ENCODE measurements at regions of chr1 and their contacts with region 1.

Region 1: GRCh38 chr1:235006132-235006943 is 122.3 kb downstream of the TOMM20 start:
- DNase-seq: no peak
- ATAC-seq: no peak
- H3K4me3 ChIP-seq: no peak overlapping the region
- H3K4me3 Mint-ChIP-seq: no peak overlapping the region
- H3K27ac ChIP-seq: no peak overlapping the region
- H3K27ac Mint-ChIP-seq: no peak overlapping the region
- H3K4me1 ChIP-seq: peaks cover 10% of the 10 kb centered on the region
- H3K4me1 Mint-ChIP-seq: peaks cover 25% of the 10 kb centered on the region
- H3K27me3 ChIP-seq: no peaks in the 10 kb centered on the region
- H3K27me3 Mint-ChIP-seq: no peaks in the 10 kb centered on the region
- CTCF ChIP-seq: no peak

Region 2: DNA sequence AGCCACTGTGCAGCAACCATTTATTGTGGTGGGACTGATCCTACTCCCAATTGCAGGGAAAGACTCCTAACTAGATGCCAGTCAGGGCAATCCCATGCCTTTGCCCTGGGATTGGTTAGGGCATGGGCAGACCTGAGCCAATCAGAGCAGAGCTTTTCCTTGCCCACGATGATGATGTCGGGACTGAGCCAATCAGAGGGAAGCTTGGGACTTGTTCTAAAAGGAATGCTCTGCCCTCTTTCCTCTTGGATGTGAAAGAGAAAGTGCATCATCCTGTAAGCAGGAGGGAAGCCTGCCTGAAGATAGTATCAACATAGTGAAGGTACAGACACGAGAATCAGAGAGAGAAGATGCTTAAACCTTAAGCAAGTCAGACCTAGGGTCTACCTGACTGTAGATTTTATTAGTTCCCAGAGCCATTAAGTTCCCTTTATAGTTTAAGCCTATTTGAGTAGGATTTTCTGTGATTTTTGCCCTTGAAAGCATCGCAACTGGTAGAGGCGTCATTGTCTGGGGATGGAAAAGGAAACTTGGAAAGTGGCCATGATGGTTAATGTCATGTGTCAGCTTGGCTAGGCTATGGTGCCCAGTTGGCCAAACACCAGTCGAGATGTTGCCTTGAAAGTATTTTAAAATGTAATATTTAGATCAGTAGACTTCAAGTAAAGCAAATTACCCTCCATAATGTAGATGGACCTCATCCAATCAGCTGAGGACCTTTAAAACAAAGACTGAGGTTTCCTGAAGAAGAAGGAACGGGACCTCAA is 416.3 kb before region 1 on chr1:
- CTCF ChIA-PET with region 1: no interaction called
- POLR2A ChIA-PET with region 1: no interaction called
- intact Hi-C with region 1: no loop called
- DNase-seq: no peak
- ATAC-seq: no peak
- H3K4me3 ChIP-seq: no peak overlapping the region
- H3K4me3 Mint-ChIP-seq: no peak overlapping the region
- H3K27ac ChIP-seq: no peak overlapping the region
- H3K27ac Mint-ChIP-seq: no peak overlapping the region
- H3K4me1 ChIP-seq: no peaks in the 10 kb centered on the region
- H3K4me1 Mint-ChIP-seq: peaks cover 9% of the 10 kb centered on the region
- H3K27me3 ChIP-seq: peaks cover 0 to 2% of the 10 kb centered on the region in 2 experiments
- H3K27me3 Mint-ChIP-seq: peaks cover 9% of the 10 kb centered on the region
- CTCF ChIP-seq: no peak

Region 3: GRCh38 chr1:234709473-234710228 is 296.7 kb before region 1 on chr1:
- CTCF ChIA-PET with region 1: no interaction called
- POLR2A ChIA-PET with region 1: no interaction called
- intact Hi-C with region 1: no loop called
- DNase-seq: no peak
- ATAC-seq: no peak
- H3K4me3 ChIP-seq: no peak overlapping the region
- H3K4me3 Mint-ChIP-seq: no peak overlapping the region
- H3K27ac ChIP-seq: no peak overlapping the region
- H3K27ac Mint-ChIP-seq: no peak overlapping the region
- H3K4me1 ChIP-seq: no peaks in the 10 kb centered on the region
- H3K4me1 Mint-ChIP-seq: peaks cover 7% of the 10 kb centered on the region
- H3K27me3 ChIP-seq: no peaks in the 10 kb centered on the region
- H3K27me3 Mint-ChIP-seq: no peaks in the 10 kb centered on the region
- CTCF ChIP-seq: no peak

Region 4: DNA sequence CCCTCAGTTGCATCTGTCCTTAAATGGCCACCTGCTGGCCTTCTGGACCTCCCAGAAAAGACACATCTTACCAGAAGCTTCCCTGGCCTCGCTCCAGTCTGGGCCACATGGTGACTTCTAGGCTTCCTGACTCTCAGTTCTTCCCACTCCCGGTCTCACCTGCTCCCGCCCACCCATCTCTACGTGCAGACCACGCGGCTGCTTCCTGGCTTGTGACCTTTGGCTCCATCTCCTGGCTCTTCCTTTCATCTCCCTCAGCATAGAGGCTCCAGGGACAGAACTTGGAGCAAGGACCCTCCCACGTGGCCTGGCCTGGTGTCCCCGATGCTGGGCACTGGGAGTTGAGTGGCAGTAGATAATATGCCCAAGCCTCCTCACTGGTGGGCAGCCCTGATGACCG is 271.5 kb before region 1 on chr1:
- CTCF ChIA-PET with region 1: no interaction called
- POLR2A ChIA-PET with region 1: no interaction called
- intact Hi-C with region 1: no loop called
- DNase-seq: no peak
- ATAC-seq: no peak
- H3K4me3 ChIP-seq: no peak overlapping the region
- H3K4me3 Mint-ChIP-seq: no peak overlapping the region
- H3K27ac ChIP-seq: no peak overlapping the region
- H3K27ac Mint-ChIP-seq: no peak overlapping the region
- H3K4me1 ChIP-seq: peaks cover 32% of the 10 kb centered on the region
- H3K4me1 Mint-ChIP-seq: peaks cover 31% of the 10 kb centered on the region
- H3K27me3 ChIP-seq: no peaks in the 10 kb centered on the region
- H3K27me3 Mint-ChIP-seq: no peaks in the 10 kb centered on the region
- CTCF ChIP-seq: no peak

Region 5: DNA sequence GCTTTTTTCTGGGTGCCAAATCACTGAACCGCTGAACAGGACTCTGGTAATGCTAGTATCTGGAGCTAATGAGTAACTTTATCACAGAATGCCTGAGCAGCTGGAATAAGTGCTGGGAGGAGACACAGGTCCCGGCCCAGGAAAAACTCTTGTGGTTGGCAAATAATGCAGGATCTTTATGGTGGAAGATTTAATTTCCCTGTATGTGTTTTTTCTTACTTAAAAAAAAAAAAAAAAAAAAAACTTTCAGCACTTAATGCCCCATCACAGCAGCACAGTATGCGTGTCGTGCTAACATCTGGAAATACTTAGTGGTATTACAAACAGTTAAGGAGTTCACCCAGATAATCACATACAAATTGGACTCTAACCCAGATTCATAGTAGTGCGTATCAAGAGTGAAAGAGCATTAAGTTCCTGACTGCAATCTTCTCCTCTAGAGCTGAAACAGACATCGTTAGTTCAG is 98.4 kb before region 1 on chr1:
- CTCF ChIA-PET with region 1: no interaction called
- POLR2A ChIA-PET with region 1: no interaction called
- intact Hi-C with region 1: loop called in 1 of 2 experiments (anchors 5 kb)
- DNase-seq: no peak
- ATAC-seq: no peak
- H3K4me3 ChIP-seq: no peak overlapping the region
- H3K4me3 Mint-ChIP-seq: no peak overlapping the region
- H3K27ac ChIP-seq: no peak overlapping the region
- H3K27ac Mint-ChIP-seq: no peak overlapping the region
- H3K4me1 ChIP-seq: peaks cover 21% of the 10 kb centered on the region
- H3K4me1 Mint-ChIP-seq: peaks cover 30% of the 10 kb centered on the region
- H3K27me3 ChIP-seq: no peaks in the 10 kb centered on the region
- H3K27me3 Mint-ChIP-seq: no peaks in the 10 kb centered on the region
- CTCF ChIP-seq: no peak

Region 6: GRCh38 chr1:234969581-234970400 is 36.5 kb before region 1 on chr1:
- CTCF ChIA-PET with region 1: no interaction called
- POLR2A ChIA-PET with region 1: interaction called, 3 read pairs
- intact Hi-C with region 1: loop called in 1 of 2 experiments (anchors 2 kb)
- DNase-seq: no peak
- ATAC-seq: no peak
- H3K4me3 ChIP-seq: no peak overlapping the region
- H3K4me3 Mint-ChIP-seq: no peak overlapping the region
- H3K27ac ChIP-seq: no peak overlapping the region
- H3K27ac Mint-ChIP-seq: no peak overlapping the region
- H3K4me1 ChIP-seq: peaks cover 20% of the 10 kb centered on the region
- H3K4me1 Mint-ChIP-seq: peaks cover 39% of the 10 kb centered on the region
- H3K27me3 ChIP-seq: no peaks in the 10 kb centered on the region
- H3K27me3 Mint-ChIP-seq: no peaks in the 10 kb centered on the region
- CTCF ChIP-seq: no peak